ENCODE measurements at regions of chr18 and their contacts with region 1.

Region 1: DNA sequence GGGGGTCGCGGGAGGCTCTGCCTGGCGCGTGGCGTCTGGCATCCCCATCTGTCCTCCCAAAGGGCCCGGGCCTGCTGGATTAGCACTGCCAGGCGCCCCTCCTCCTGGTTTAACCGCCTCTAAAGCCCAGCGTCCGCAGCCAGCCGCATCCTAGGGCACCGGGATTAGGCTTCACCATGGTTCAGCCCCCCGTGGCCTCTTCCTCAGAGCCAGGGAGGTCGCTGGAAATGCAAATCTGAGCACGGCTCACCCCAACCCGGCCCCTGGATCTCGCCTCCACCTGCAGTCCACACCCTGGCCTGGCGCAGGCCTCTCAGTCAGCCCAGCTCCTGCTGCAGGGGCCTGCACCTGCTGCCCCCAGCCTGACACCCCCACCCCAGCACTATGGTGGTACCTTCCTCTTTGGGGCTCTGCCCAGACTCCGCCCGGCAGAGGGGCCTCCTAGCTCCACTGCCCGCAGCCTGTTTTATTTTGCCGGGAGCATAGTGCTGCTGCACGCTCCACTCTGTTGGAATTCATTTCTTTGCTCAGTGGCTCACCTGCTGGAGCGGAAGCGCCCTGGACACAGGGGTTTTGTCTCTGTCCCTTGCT is 13.2 kb downstream of the PRELID3A start:
- DNase-seq: peak; percentile 52 to 86 (median 76)
- H3K4me3 ChIP-seq: peak overlapping the region; percentile 35 to 89 (median 65)
- H3K27ac ChIP-seq: peak overlapping the region in 1 of 2 experiments; percentile 54
- H3K4me1 ChIP-seq: peaks cover 0 to 31% (median 19%) of the 10 kb centered on the region in 4 experiments
- H3K27me3 ChIP-seq: no peaks in the 10 kb centered on the region

Region 2: GRCh38 chr18:12376718-12377555 is 44.0 kb before region 1 on chr18 and contains the start of gene AFG3L2:
- CTCF ChIA-PET with region 1: no interaction called
- POLR2A ChIA-PET with region 1: no interaction called
- DNase-seq: peak; percentile 99
- H3K4me3 ChIP-seq: peak within 1 kb of the TSS; percentile 60 to 98 (median 87)
- H3K27ac ChIP-seq: peak within 1 kb of the TSS; percentile 81 to 94
- H3K4me1 ChIP-seq: peaks cover 3 to 41% (median 25%) of the 10 kb centered on the region in 4 experiments
- H3K27me3 ChIP-seq: no peaks in the 10 kb centered on the region

Region 3: DNA sequence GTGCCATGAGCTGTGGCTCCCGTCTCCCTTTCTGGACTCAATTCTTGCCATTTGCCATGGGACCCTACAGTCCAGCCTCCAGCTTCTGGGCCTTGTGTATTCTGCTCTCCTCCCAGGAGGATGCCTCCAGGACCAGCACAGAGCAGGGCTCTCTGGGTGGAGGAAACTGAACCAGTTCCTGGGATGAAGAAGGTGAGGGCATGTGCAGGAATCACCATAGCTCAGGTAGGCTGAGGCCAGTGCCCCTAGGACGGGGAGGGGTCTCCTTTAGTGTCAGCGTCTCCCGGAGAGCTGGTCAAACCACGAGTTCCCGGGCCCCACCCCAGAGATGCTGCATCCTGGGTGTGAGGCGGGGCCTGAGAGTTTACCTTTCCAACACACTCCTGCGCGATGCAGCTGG is 19.1 kb before region 1 on chr18:
- CTCF ChIA-PET with region 1: interaction called, 38 read pairs
- POLR2A ChIA-PET with region 1: no interaction called
- DNase-seq: no peak
- H3K4me3 ChIP-seq: no peak overlapping the region
- H3K27ac ChIP-seq: no peak overlapping the region
- H3K4me1 ChIP-seq: peaks cover 0 to 5% (median 1%) of the 10 kb centered on the region in 4 experiments
- H3K27me3 ChIP-seq: no peaks in the 10 kb centered on the region

Region 4: DNA sequence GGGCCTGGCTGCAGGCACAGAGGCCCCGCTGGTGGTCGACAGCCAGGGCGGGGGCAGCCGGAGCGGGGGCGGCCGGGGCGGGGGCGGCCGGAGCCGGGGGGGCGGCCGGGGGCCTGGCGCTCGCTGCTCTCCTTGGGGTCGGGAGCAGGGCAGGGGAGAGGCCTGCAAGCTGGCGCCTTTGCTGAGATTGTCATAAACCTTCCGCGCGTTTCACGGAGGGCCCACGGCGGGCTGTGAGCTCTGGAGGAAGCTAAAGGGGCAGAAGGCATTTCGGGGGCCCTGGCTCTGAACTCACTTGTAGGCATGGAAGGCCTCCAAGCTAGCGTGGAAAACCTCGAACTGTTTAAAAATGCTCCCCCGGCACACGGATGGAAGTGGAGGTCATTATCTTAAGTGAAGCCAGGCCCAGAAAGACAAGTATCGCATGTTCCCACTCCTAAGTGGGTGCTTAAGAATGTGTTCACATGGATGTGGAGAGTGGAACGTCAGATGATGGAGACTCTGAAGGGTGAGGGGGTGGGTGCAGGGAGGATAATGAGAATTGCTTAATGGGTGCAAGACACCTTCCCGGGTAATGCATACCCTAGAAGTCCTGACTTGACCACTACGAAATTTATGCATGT is 12.6 kb before region 1 on chr18:
- CTCF ChIA-PET with region 1: interaction called, 38 read pairs
- POLR2A ChIA-PET with region 1: interaction called, 3 read pairs
- DNase-seq: peak in 2 of 3 donors; percentile 46 to 59
- H3K4me3 ChIP-seq: peak overlapping the region in 6 of 7 experiments; percentile 37 to 78 (median 68)
- H3K27ac ChIP-seq: no peak overlapping the region
- H3K4me1 ChIP-seq: peaks cover 0 to 18% (median 10%) of the 10 kb centered on the region in 4 experiments
- H3K27me3 ChIP-seq: no peaks in the 10 kb centered on the region

Region 5: DNA sequence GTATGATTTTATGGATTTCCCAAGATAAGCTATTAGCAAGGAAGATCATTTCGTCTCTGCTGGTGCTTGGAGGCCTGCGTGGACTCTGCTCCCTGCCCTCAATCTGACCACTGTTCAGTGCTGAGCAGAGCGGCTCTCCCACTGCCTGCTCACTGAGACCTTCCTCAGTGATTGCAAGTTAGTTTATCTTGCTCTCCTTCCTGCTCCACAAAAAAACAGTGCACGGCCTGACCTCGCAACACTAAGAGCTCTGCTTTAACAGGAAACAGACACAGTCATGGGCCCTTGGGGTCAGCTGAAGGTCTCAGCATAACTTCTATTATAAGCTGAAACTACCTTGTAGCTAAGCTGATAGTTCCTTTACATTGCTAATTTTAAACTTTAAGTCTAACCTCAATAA is 39.9 kb after region 1 on chr18:
- CTCF ChIA-PET with region 1: no interaction called
- POLR2A ChIA-PET with region 1: no interaction called
- DNase-seq: no peak
- H3K4me3 ChIP-seq: no peak overlapping the region
- H3K27ac ChIP-seq: peak overlapping the region in 1 of 2 experiments; percentile 9
- H3K4me1 ChIP-seq: peaks cover 0 to 5% (median 4%) of the 10 kb centered on the region in 4 experiments
- H3K27me3 ChIP-seq: no peaks in the 10 kb centered on the region

Region 6: DNA sequence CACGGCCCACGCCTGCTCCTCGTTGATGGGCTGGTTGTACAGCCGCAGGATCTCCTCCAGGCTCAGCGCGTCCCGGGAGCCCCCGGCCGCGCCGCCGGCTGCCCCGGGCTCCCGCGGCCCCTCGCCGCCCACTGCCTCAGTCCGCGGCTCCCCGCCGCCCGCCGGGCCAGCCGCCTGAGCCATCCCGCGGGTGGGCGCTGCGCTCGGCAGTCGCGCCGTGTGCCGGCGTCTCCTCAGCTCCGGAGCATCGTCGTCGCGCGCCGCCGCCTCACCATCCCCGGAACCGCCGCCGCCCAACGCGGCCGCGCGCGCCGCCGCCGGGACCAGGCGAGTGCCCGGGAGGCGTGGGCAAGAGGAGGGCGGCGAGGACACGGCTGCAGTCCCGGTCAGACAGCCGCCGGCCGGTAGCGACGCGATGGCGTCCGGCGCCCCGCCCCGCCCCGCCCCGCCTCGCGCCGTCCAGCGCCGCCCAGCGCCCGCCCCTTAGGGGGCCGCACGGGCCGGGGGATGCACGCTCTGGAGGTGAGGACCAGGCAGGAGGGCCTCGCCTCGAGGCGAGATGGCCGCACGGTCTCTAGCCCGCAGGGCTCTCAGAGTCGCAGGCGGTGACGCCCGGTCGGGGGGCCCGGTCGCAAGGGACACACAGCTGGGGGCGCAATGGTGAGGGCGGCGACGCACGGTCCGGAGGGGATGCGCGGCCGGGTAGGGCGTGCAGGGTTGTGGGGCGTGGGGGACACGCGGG is 236.9 kb after region 1 on chr18 and contains the start of gene SPIRE1:
- CTCF ChIA-PET with region 1: interaction called, 38 read pairs
- POLR2A ChIA-PET with region 1: no interaction called
- DNase-seq: peak; percentile 18 to 62 (median 45)
- H3K4me3 ChIP-seq: peak within 1 kb of the TSS; percentile 60 to 82 (median 71)
- H3K27ac ChIP-seq: peak within 1 kb of the TSS in 1 of 2 experiments; percentile 44
- H3K4me1 ChIP-seq: peaks cover 4 to 27% (median 12%) of the 10 kb centered on the region in 4 experiments
- H3K27me3 ChIP-seq: peaks cover 0 to 2% (median 0%) of the 10 kb centered on the region in 5 experiments